A549 (cell line): ENCODE measurements at regions of chr10 and their contacts with region 1.

Region 1: GRCh38 chr10:96491299-96491698 is 22.4 kb downstream of the TLL2 start:
- DNase-seq: no peak
- ATAC-seq: peak in 1 of 2 experiments; percentile 68; a peak in 3 of 6 replicates
- H3K4me3 ChIP-seq: no peak overlapping the region
- H3K27ac ChIP-seq: no peak overlapping the region
- H3K4me1 ChIP-seq: no peaks in the 10 kb centered on the region
- CTCF ChIP-seq: peak; percentile 23; the same call in 2 of the 3 replicates
- EP300 ChIP-seq: no peak
- POLR2A ChIP-seq: no peak
- RAD21 ChIP-seq: peak; percentile 33 to 59; a peak in 4 of 5 replicates

Region 2: DNA sequence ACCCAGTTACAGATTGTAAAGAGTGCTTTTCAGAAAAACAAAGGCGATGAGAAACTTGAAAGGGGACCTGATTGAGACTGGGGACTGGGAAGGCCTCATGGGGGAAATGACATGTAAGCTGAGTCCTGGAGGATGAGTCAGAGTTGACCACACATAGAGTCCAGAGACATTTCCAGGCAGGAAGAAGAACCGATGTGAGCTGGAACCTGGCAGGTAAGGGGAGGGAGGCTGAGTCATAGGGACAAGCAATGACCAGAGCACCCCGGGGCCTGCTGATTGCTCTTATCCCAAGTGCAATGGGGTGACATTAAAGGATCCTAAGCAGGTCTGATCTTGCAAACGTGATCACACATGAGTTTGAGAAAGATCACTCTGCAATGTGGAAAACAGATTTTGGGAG is 10.7 kb after region 1 on chr10:
- CTCF ChIA-PET with region 1: interaction called, 13 read pairs
- POLR2A ChIA-PET with region 1: no interaction called
- DNase-seq: no peak
- ATAC-seq: no peak; a peak in 1 of 6 replicates
- H3K4me3 ChIP-seq: no peak overlapping the region
- H3K27ac ChIP-seq: no peak overlapping the region
- H3K4me1 ChIP-seq: no peaks in the 10 kb centered on the region
- CTCF ChIP-seq: no peak
- EP300 ChIP-seq: no peak
- POLR2A ChIP-seq: no peak
- RAD21 ChIP-seq: no peak